Heart left ventricle (tissue), 16 donors: ENCODE measurements at regions of chr6 and their contacts with region 1.

Region 1: DNA sequence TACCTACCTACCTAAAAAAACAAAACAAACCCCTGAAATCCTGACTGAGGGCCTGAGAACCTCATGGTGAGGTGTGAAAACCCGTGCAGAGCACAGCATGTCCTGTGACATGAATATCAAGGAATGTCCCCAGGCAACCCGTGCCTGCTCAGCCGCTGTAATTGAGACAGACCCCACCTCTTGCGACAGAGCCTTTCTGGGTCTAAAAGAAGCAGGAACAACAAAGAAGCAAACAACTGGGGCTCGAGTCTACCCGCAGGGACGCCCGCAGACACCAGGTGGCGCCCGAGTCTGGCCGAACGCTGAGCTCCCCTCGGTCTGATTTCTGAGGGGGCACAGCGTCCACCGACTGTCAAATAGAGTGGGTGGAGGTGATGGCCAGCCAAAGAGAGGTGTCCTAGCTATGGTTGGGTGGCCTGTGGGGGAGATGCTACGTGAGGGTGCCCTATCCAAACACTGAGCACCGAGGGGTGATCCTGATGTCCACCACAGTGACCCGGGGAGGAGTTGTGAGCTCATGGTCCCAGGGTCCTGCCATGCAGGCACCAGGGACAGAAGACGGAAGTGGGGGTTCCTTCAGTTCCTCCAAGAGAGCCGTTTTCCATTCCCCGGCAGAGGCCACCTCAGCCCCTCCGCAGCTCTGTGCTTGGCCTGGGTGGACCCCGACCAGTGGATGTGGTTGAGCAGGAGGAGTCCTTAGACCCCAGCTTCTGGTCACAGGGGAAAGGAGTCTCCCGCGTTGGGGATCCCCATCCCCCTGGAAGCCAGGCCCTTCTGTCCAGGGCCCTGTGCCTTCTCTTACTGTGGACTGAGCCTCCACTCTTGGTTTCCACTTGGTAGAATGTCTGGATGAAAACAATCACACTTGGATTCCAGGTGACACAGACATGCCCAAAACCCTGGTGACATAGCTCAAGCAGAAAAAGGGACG is 268.2 kb downstream of the CDC5L start:
- DNase-seq: peak; percentile 52 to 86 (median 61)
- ATAC-seq: peak; percentile 63 to 86 (median 74)
- H3K4me3 ChIP-seq: no peak overlapping the region
- H3K27ac ChIP-seq: no peak overlapping the region
- H3K4me1 ChIP-seq: peaks cover 0 to 9% (median 0%) of the 10 kb centered on the region in 12 donors
- H3K27me3 ChIP-seq: peaks cover 0 to 4% (median 0%) of the 10 kb centered on the region in 9 donors
- CTCF ChIP-seq: peak; percentile 80 to 98 (median 94)
- POLR2A ChIP-seq: no peak

Region 2: DNA sequence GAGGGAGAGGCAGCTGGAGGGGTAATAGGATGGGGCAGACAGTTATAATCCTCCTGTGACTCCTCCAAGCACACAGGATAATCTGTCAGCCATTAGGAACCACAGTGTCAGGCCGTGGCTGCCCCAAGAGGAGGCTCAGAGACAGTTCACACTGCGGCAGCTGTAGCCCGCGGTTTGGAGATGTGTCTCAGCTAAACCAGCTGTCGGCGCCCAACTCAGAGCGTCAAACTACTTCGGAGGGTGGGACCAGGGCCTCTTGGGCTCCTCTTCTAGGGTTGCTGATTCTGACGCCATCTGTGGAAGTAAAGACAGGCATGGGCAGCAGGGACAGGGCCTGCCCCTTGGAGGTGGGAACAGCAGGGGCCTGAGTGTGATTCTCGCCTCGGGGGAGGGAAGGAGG is 41.6 kb after region 1 on chr6:
- intact Hi-C with region 1: no loop called
- DNase-seq: peak in 4 of 5 donors; percentile 32 to 60 (median 50)
- ATAC-seq: peak; percentile 32 to 75 (median 58)
- H3K4me3 ChIP-seq: no peak overlapping the region
- H3K27ac ChIP-seq: no peak overlapping the region
- H3K4me1 ChIP-seq: peaks cover 0 to 12% (median 2%) of the 10 kb centered on the region in 12 donors
- H3K27me3 ChIP-seq: no peaks in the 10 kb centered on the region
- CTCF ChIP-seq: peak in 1 of 12 donors; percentile 9
- POLR2A ChIP-seq: no peak

Region 3: DNA sequence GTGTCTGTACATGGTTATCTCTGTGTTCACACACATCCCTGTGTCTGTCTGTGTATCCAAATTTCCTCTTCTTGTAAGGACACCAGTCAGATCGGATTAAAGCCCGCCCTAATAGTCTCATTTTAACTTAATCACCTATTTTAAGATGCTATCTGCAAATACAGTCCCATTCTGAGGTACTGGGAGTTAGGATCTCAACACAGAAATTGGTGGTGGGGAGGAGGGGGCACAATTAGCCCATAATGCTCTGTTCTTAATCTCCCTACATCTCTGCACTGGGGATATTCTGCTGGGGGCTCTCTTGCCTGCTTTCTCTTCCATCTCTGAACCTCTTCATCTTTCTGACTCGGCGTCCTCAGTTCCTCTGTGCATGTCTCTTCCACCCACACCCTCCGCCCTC is 52.5 kb after region 1 on chr6:
- intact Hi-C with region 1: no loop called
- DNase-seq: no peak
- ATAC-seq: no peak
- H3K4me3 ChIP-seq: no peak overlapping the region
- H3K27ac ChIP-seq: no peak overlapping the region
- H3K4me1 ChIP-seq: no peaks in the 10 kb centered on the region
- H3K27me3 ChIP-seq: no peaks in the 10 kb centered on the region
- CTCF ChIP-seq: no peak
- POLR2A ChIP-seq: no peak

Region 4: GRCh38 chr6:45421709-45422502 is 766.2 kb after region 1 on chr6:
- intact Hi-C with region 1: loop called (anchors 2 to 10 kb)
- DNase-seq: peak; percentile 50 to 81 (median 65)
- ATAC-seq: peak; percentile 39 to 77 (median 56)
- H3K4me3 ChIP-seq: peak overlapping the region; percentile 41 to 81 (median 70)
- H3K27ac ChIP-seq: peak overlapping the region in 7 of 12 donors; percentile 37 to 82 (median 54)
- H3K4me1 ChIP-seq: peaks cover 2 to 48% (median 21%) of the 10 kb centered on the region in 12 donors
- H3K27me3 ChIP-seq: peaks cover 2 to 55% (median 23%) of the 10 kb centered on the region in 9 donors
- CTCF ChIP-seq: peak in 6 of 12 donors; percentile 4 to 42 (median 19)
- POLR2A ChIP-seq: no peak

Region 5: DNA sequence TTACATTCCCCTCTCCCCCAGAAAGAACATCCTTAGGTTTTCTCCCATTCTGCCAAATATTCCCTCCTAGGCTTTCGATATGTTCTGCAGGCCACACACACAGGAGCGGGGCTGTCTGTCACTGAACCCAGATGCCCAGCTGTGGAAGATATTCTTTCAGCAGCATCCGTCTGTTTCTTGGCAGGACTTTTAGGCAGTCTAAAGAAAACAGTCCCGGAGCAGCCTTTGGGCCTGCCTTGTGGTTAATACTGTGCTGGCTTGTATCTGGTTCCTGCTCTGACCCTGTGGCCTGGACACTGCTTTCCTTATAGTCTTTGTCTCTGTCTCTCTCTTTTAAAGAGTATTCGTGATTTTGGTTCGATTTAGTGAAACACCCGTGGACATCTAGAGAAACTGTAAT is 816.7 kb after region 1 on chr6:
- intact Hi-C with region 1: no loop called
- DNase-seq: peak in 4 of 5 donors; percentile 17 to 30 (median 24)
- ATAC-seq: peak in 3 of 4 donors; percentile 76 to 82 (median 77)
- H3K4me3 ChIP-seq: no peak overlapping the region
- H3K27ac ChIP-seq: peak overlapping the region in 4 of 12 donors; percentile 0 to 34 (median 17)
- H3K4me1 ChIP-seq: peaks cover 0 to 14% (median 0%) of the 10 kb centered on the region in 12 donors
- H3K27me3 ChIP-seq: no peaks in the 10 kb centered on the region
- CTCF ChIP-seq: no peak
- POLR2A ChIP-seq: no peak

Region 6: GRCh38 chr6:45714741-45715507 is 1059.2 kb after region 1 on chr6:
- intact Hi-C with region 1: loop called (anchors 1 to 5 kb)
- DNase-seq: peak in 3 of 5 donors; percentile 33 to 54 (median 42)
- ATAC-seq: peak; percentile 85 to 94 (median 94)
- H3K4me3 ChIP-seq: peak overlapping the region in 3 of 12 donors; percentile 12 to 23 (median 22)
- H3K27ac ChIP-seq: no peak overlapping the region
- H3K4me1 ChIP-seq: peaks cover 0 to 15% (median 1%) of the 10 kb centered on the region in 12 donors
- H3K27me3 ChIP-seq: no peaks in the 10 kb centered on the region
- CTCF ChIP-seq: peak; percentile 66 to 88 (median 80)
- POLR2A ChIP-seq: no peak

Region 7: GRCh38 chr6:45916692-45917091 is 1261.0 kb after region 1 on chr6:
- intact Hi-C with region 1: loop called in 8 of 10 experiments (anchors 5 to 10 kb)
- DNase-seq: no peak
- ATAC-seq: peak; percentile 47 to 68 (median 60)
- H3K4me3 ChIP-seq: no peak overlapping the region
- H3K27ac ChIP-seq: peak overlapping the region in 9 of 12 donors; percentile 28 to 67 (median 33)
- H3K4me1 ChIP-seq: peaks cover 0 to 36% (median 7%) of the 10 kb centered on the region in 12 donors
- H3K27me3 ChIP-seq: no peaks in the 10 kb centered on the region
- CTCF ChIP-seq: no peak
- POLR2A ChIP-seq: no peak

Region 8: GRCh38 chr6:45922728-45923351 is 1267.2 kb after region 1 on chr6:
- intact Hi-C with region 1: loop called in 8 of 10 experiments (anchors 5 to 10 kb)
- DNase-seq: peak; percentile 58 to 72 (median 62)
- ATAC-seq: peak; percentile 51 to 75 (median 73)
- H3K4me3 ChIP-seq: no peak overlapping the region
- H3K27ac ChIP-seq: peak overlapping the region in 1 of 12 donors; percentile 24
- H3K4me1 ChIP-seq: peaks cover 0 to 58% (median 29%) of the 10 kb centered on the region in 12 donors
- H3K27me3 ChIP-seq: no peaks in the 10 kb centered on the region
- CTCF ChIP-seq: peak; percentile 30 to 71 (median 60)
- POLR2A ChIP-seq: no peak